A549 (cell line): ENCODE measurements at regions of chr9 and their contacts with region 1.

Region 1: GRCh38 chr9:134185536-134186011 is 21.2 kb upstream of the RNU6ATAC start:
- DNase-seq: no peak
- ATAC-seq: no peak
- H3K4me3 ChIP-seq: no peak overlapping the region
- H3K27ac ChIP-seq: no peak overlapping the region
- H3K4me1 ChIP-seq: no peaks in the 10 kb centered on the region
- CTCF ChIP-seq: no peak
- EP300 ChIP-seq: no peak
- POLR2A ChIP-seq: no peak
- RAD21 ChIP-seq: no peak

Region 2: GRCh38 chr9:134198791-134199190 is 13.2 kb after region 1 on chr9:
- CTCF ChIA-PET with region 1: interaction called, 13 read pairs
- POLR2A ChIA-PET with region 1: no interaction called
- DNase-seq: no peak
- ATAC-seq: no peak
- H3K4me3 ChIP-seq: no peak overlapping the region
- H3K27ac ChIP-seq: no peak overlapping the region
- H3K4me1 ChIP-seq: no peaks in the 10 kb centered on the region
- CTCF ChIP-seq: no peak
- EP300 ChIP-seq: no peak
- POLR2A ChIP-seq: no peak
- RAD21 ChIP-seq: no peak